Right ventricle myocardium inferior (tissue), 1 donor: ENCODE measurements at regions of chr13 and their contacts with region 1.

Region 1: DNA sequence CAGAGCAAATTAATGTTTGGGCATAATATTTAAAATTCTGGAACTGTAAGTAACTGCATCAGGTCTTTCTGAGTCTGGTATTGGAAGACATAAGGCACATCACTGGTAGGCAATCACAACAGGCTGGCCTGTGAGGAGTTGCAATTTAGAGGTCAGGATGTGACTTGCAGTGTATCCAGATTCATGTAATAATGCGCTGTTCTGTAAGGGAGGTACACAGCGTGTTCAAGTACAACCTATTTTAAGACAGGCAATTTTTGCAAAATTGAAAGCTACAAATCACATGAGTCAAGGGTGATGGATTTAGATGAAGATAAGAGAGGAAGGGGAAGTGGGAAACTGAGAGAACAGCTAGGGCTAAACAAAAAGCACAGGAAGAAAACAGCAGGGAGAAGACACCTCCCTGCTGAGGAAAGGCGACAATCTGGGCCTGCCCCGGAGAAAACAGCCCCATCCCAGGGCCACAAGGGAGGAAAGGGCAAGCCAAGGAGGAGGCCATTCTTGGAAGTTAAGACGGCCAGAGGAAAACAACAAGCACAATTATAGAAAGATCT is 138.1 kb downstream of the LACC1 start:
- DNase-seq: no peak
- ATAC-seq: no peak

Region 2: GRCh38 chr13:43935878-43936277 is 82.0 kb before region 1 on chr13:
- intact Hi-C with region 1: loop called (anchors 5 kb)
- DNase-seq: no peak
- ATAC-seq: no peak

Region 3: DNA sequence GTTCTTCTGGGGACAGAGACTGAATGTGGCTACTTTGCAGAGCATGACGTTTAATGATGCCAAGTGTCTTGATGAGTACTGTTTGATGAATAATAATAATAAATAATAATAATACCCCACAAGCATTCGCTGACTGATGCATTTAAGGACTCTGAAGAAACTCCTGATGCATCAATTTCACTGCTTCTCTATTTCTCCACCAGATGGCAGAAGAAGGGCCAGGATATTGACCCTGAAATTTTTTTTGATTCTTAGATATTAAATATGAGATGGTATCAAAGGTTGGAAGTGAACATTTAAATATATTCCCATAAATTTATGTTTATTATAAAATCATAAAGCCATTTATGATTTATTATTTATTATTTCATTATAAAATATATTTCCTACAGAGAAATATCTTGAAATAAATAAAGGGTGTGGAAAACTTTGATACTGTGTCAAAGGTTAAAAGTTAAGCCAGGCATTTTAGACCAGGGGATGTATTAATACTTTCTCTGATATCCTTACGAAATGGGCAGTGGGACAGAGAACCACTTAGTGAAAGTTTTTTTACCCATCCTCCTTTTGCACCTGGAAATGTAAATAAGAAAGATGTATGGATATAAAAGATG is 32.7 kb after region 1 on chr13:
- intact Hi-C with region 1: no loop called
- DNase-seq: no peak
- ATAC-seq: no peak